Natural killer cell (primary cell): ENCODE measurements at regions of chr16 and their contacts with region 1.

Region 1: GRCh38 chr16:55465077-55465896 is 13.7 kb upstream of the MMP2 start:
- DNase-seq: peak; percentile 79 to 89
- ATAC-seq: peak; percentile 96 to 100 (median 100)
- H3K4me3 ChIP-seq: no peak overlapping the region
- H3K4me3 Mint-ChIP-seq: no peak overlapping the region
- H3K27ac ChIP-seq: no peak overlapping the region
- H3K27ac Mint-ChIP-seq: no peak overlapping the region
- H3K4me1 ChIP-seq: peaks cover 2% of the 10 kb centered on the region
- H3K4me1 Mint-ChIP-seq: peaks cover 0 to 3% of the 10 kb centered on the region in 2 donors
- H3K27me3 ChIP-seq: no peaks in the 10 kb centered on the region
- H3K27me3 Mint-ChIP-seq: no peaks in the 10 kb centered on the region
- CTCF ChIP-seq: peak; percentile 99

Region 2: GRCh38 chr16:53549970-53550690 is 1915.2 kb before region 1 on chr16:
- intact Hi-C with region 1: loop called (anchors 5 kb)
- DNase-seq: peak; percentile 22 to 84
- ATAC-seq: peak; percentile 65 to 96 (median 94)
- H3K4me3 ChIP-seq: no peak overlapping the region
- H3K4me3 Mint-ChIP-seq: no peak overlapping the region
- H3K27ac ChIP-seq: no peak overlapping the region
- H3K27ac Mint-ChIP-seq: peak overlapping the region in 1 of 2 donors; percentile 35
- H3K4me1 ChIP-seq: peaks cover 9% of the 10 kb centered on the region
- H3K4me1 Mint-ChIP-seq: peaks cover 18 to 21% of the 10 kb centered on the region in 2 donors
- H3K27me3 ChIP-seq: no peaks in the 10 kb centered on the region
- H3K27me3 Mint-ChIP-seq: peaks cover 15 to 32% of the 10 kb centered on the region in 2 donors
- CTCF ChIP-seq: peak; percentile 76

Region 3: DNA sequence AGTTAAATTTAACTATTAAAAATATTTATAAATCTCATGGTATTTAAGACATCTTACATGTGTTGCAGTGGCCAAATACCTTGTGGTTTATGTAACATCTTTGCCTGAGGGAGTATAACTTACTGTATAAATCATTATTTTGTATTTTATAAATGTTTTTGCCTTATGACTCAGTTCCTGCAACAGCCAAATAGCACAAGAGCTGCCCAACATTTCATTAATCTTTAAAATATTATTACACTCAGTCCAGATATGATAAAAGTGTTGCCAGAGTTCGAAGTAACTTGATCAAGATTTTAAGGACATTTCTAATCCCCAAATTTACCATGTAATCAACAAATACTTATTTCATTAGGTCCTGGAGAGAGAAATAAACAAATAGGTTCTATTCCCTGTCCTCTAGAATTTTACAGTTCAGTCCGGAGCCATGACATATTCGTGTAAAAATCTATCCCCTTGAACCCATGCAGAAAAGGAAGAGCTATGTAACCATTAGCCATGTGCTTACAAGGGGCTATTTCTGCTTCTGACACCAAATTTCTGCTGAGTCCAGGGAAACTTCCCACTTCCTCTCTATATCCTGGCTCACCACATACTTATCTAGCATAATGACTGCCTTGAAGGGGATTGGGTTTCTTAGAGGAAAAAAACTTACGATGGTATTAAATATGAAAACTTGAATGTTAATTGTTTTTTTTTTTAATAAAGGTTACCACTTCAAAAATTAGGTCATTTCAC is 97.3 kb before region 1 on chr16:
- intact Hi-C with region 1: no loop called
- DNase-seq: no peak
- ATAC-seq: no peak
- H3K4me3 ChIP-seq: no peak overlapping the region
- H3K4me3 Mint-ChIP-seq: no peak overlapping the region
- H3K27ac ChIP-seq: no peak overlapping the region
- H3K27ac Mint-ChIP-seq: no peak overlapping the region
- H3K4me1 ChIP-seq: no peaks in the 10 kb centered on the region
- H3K4me1 Mint-ChIP-seq: no peaks in the 10 kb centered on the region
- H3K27me3 ChIP-seq: peaks cover 6% of the 10 kb centered on the region
- H3K27me3 Mint-ChIP-seq: peaks cover 32 to 67% of the 10 kb centered on the region in 2 donors
- CTCF ChIP-seq: no peak

Region 4: DNA sequence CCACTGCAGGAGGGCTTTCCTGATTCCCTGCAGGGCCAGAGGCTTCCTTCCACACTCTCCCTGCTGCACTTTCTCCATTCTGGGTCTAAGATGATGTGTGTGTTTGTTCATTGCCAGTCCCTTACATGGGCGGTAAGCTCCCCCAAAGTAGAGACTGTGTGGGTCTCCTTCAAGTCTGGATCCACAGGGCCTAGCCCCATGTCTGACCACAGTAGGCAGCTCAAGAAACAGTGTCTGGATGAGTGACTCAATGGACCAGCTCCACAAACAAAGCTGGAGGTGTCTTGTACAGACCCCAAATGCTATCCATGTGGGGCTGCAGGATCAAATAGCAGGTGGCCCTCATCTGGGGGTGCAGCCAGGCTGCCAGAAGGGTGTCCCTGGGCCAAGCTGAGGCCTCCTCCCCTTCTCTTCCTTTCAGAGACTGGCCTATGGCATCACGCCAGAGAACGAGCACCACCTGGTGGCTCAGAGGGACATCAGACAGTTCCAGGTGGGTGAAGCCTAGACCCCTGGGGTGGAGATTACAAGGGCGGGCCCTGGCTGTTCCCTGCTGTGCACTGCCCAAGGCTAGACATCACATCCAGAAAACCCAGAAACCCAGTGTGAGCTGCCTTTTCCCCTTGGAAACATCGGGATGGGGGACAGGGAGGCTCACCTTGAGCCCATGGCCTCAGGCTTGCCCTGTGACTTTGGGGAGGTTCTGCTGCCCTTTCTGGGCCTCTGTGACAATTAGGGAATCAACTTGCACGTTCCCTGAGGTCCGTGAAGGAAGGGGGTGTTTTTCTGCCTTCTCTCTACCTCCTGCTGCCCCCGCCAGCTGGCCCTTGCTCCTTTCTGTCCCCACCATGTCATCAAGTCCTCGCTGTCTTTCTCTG is 236.4 kb after region 1 on chr16:
- intact Hi-C with region 1: loop called (anchors 5 kb)
- DNase-seq: peak in 1 of 2 donors; percentile 52
- ATAC-seq: peak in 1 of 3 donors; percentile 43
- H3K4me3 ChIP-seq: no peak overlapping the region
- H3K4me3 Mint-ChIP-seq: no peak overlapping the region
- H3K27ac ChIP-seq: no peak overlapping the region
- H3K27ac Mint-ChIP-seq: no peak overlapping the region
- H3K4me1 ChIP-seq: peaks cover 4% of the 10 kb centered on the region
- H3K4me1 Mint-ChIP-seq: peaks cover 0 to 6% of the 10 kb centered on the region in 2 donors
- H3K27me3 ChIP-seq: no peaks in the 10 kb centered on the region
- H3K27me3 Mint-ChIP-seq: peaks cover 0 to 9% of the 10 kb centered on the region in 2 donors
- CTCF ChIP-seq: no peak

Region 5: GRCh38 chr16:55842369-55843104 is 377.2 kb after region 1 on chr16:
- intact Hi-C with region 1: loop called (anchors 1 kb)
- DNase-seq: peak in 1 of 2 donors; percentile 65
- ATAC-seq: peak in 2 of 3 donors; percentile 65 to 70
- H3K4me3 ChIP-seq: no peak overlapping the region
- H3K4me3 Mint-ChIP-seq: no peak overlapping the region
- H3K27ac ChIP-seq: no peak overlapping the region
- H3K27ac Mint-ChIP-seq: no peak overlapping the region
- H3K4me1 ChIP-seq: no peaks in the 10 kb centered on the region
- H3K4me1 Mint-ChIP-seq: no peaks in the 10 kb centered on the region
- H3K27me3 ChIP-seq: no peaks in the 10 kb centered on the region
- H3K27me3 Mint-ChIP-seq: peaks cover 8 to 12% of the 10 kb centered on the region in 2 donors
- CTCF ChIP-seq: peak; percentile 92